PC-9 (cell line): ENCODE measurements at regions of chr20 and their contacts with region 1.

Region 1: DNA sequence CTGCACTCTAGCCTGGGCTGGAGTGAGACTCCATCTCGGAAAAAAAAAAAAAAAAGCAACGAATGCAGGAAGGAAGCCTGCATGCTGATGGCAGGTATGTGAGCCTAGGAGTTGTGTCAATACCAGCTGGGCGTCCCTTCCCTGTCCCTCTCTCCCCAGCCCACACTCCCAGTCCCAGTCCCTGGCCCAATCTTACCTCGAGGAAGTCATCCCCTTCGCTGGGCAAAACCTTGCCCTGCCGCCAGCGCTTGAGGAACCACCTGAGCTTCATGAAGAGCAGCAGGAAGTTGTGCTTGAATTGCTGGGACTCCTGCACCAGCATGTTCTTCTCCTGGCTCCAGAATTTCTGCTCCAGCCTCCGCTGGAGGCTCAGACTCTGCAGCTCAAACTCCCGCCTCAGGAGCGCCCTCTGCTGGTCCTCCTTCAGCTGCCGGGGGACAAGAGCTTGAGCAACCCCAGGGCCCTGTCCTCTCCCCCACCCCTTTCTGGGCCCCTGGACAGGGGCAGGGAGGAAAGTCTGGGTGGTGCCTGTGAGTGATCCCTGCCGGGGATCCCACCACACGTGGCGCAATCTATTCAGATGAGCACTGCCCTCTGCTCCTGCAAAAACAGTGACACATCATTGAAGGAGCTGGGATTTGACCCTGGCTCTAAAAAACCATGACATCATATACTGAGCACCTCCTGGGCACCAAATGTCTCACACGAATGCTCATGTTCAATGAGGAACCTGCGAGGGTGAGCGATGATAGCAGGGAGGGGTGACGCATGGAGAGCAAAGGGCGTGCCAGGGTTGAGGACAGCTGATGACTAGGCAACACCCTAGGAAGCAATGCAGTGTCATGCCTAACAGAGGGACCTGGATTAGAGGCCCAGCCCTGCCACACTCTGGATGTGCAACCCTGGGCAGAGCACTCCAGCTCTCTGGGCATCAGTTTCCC is 35.0 kb upstream of the DSN1 start:
- DNase-seq: peak; percentile 82 to 96
- H3K4me3 ChIP-seq: no peak overlapping the region
- H3K27ac ChIP-seq: peak overlapping the region; percentile 89
- H3K4me1 ChIP-seq: peaks cover 42% of the 10 kb centered on the region
- H3K27me3 ChIP-seq: no peaks in the 10 kb centered on the region
- CTCF ChIP-seq: peak; percentile 94

Region 2: DNA sequence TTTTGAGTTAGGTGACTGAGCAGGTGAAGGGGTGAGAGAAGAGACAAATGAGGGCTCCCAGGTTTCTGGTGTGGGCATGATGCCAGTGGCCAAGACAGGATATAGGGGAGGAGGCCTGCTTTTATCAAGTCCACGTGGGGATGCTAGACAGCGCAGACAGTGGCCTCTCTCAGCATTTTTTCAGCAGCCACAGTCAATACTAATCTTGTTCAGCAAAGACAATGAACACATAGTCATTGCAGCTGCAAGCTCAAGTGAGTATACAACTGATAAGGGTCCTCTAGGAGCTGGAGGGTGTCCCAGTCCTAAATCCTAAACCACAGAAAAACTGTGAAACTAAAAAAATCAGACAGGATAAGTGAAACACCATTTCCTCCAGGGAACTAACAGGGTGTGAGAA is 1445.4 kb before region 1 on chr20:
- CTCF ChIA-PET with region 1: no interaction called
- POLR2A ChIA-PET with region 1: no interaction called
- intact Hi-C with region 1: no loop called
- DNase-seq: no peak
- H3K4me3 ChIP-seq: no peak overlapping the region
- H3K27ac ChIP-seq: no peak overlapping the region
- H3K4me1 ChIP-seq: peaks cover 3% of the 10 kb centered on the region; the same call in 1 of the 2 replicates
- H3K27me3 ChIP-seq: no peaks in the 10 kb centered on the region
- CTCF ChIP-seq: no peak

Region 3: GRCh38 chr20:36773597-36774390 is 34.8 kb before region 1 on chr20 and contains the start of gene DSN1:
- CTCF ChIA-PET with region 1: no interaction called
- POLR2A ChIA-PET with region 1: interaction called, 6 read pairs
- intact Hi-C with region 1: loop called (anchors 2 kb)
- DNase-seq: peak; percentile 91 to 99
- H3K4me3 ChIP-seq: peak within 1 kb of the TSS; percentile 70
- H3K27ac ChIP-seq: peak within 1 kb of the TSS; percentile 85
- H3K4me1 ChIP-seq: peaks cover 7% of the 10 kb centered on the region
- H3K27me3 ChIP-seq: no peaks in the 10 kb centered on the region
- CTCF ChIP-seq: peak; percentile 87
- total RNA-seq, gene DSN1: 29.2 and 32.4 TPM in 2 replicates

Region 4: GRCh38 chr20:36784900-36785299 is 23.7 kb before region 1 on chr20:
- CTCF ChIA-PET with region 1: interaction called, 20 read pairs
- POLR2A ChIA-PET with region 1: no interaction called
- intact Hi-C with region 1: no loop called
- DNase-seq: no peak
- H3K4me3 ChIP-seq: no peak overlapping the region
- H3K27ac ChIP-seq: no peak overlapping the region
- H3K4me1 ChIP-seq: no peaks in the 10 kb centered on the region
- H3K27me3 ChIP-seq: no peaks in the 10 kb centered on the region
- CTCF ChIP-seq: no peak

Region 5: DNA sequence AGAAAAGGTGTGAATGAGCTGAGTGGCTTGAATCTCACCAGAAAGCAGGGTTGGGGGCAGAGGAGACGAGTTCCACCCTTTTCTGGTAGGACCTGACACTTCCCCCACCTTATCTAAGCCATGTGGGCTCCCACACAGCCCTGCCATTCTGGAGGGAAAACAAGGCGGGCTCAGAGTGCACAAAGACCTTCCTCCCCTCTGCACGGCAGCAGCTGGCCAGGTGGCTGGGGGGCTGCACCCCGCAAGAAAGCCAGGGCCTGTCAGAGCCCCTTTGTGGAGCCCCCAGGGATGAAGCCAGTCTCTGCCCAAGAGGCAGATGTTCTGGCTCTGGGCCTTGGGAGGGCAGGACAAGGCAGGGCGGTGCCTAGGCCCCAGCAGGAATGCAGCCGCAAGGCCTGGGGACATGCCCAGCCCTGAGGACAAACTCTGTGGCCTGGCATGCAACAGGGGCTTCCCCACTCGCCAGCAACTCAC is 13.4 kb after region 1 on chr20:
- CTCF ChIA-PET with region 1: interaction called, 6 read pairs
- POLR2A ChIA-PET with region 1: no interaction called
- intact Hi-C with region 1: loop called (anchors 1 kb)
- DNase-seq: peak; percentile 41 to 89
- H3K4me3 ChIP-seq: no peak overlapping the region
- H3K27ac ChIP-seq: no peak overlapping the region
- H3K4me1 ChIP-seq: peaks cover 47% of the 10 kb centered on the region
- H3K27me3 ChIP-seq: no peaks in the 10 kb centered on the region
- CTCF ChIP-seq: no peak

Region 6: GRCh38 chr20:36835453-36836198 is 27.0 kb after region 1 on chr20:
- CTCF ChIA-PET with region 1: interaction called, 47 read pairs
- POLR2A ChIA-PET with region 1: interaction called, 25 read pairs
- intact Hi-C with region 1: no loop called
- DNase-seq: peak; percentile 73 to 93
- H3K4me3 ChIP-seq: peak overlapping the region; percentile 39; the same call in 1 of the 2 replicates
- H3K27ac ChIP-seq: 0 out of 2 replicates have a peak overlapping the region, but pooled peaks have one; percentile 16
- H3K4me1 ChIP-seq: peaks cover 18% of the 10 kb centered on the region
- H3K27me3 ChIP-seq: no peaks in the 10 kb centered on the region
- CTCF ChIP-seq: no peak

Region 7: DNA sequence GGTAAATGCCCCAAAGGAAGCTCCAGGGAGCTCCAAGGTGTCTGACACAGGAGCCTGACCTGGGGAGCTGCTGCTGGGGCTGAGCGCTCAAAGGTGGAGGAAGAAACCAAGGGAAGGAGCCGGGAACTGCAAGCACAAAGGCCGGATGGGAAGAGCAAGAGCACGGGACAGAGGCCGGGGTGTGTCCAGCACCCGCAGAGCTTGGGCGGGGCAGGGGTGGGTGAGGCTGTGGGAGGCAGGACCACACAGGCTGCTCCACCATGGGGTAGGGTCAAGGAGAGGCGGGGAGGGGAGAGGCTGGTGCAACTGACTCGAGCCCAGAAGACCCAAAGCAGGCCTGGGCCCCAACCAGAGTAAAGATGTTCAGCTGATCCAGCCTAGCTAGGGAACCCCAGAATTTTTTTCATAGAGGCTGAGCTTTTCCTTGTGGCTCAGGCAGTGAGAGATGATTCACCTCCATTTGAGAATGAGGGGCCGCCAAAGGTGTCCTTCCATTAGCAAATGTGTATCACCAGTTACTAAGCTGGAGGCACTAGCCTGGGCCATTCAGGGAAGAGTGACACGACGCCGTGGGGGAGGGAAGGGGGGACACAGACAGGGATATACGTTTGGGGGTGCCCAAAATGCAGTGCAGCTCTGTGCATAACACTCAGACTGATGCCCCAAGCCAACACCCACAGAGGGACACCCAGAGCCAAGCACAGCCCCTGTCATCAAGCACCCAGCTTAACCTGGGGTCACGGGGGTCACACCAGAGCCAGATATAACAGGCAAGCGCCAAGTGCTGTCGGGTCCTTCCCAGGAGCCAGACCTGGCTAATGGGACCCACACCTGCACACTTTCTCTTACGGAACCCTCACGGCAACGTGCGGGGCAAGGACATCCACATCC is 46.0 kb after region 1 on chr20:
- CTCF ChIA-PET with region 1: interaction called, 10 read pairs
- POLR2A ChIA-PET with region 1: no interaction called
- intact Hi-C with region 1: no loop called
- DNase-seq: no peak
- H3K4me3 ChIP-seq: no peak overlapping the region
- H3K27ac ChIP-seq: no peak overlapping the region
- H3K4me1 ChIP-seq: no peaks in the 10 kb centered on the region
- H3K27me3 ChIP-seq: no peaks in the 10 kb centered on the region
- CTCF ChIP-seq: no peak

Region 8: DNA sequence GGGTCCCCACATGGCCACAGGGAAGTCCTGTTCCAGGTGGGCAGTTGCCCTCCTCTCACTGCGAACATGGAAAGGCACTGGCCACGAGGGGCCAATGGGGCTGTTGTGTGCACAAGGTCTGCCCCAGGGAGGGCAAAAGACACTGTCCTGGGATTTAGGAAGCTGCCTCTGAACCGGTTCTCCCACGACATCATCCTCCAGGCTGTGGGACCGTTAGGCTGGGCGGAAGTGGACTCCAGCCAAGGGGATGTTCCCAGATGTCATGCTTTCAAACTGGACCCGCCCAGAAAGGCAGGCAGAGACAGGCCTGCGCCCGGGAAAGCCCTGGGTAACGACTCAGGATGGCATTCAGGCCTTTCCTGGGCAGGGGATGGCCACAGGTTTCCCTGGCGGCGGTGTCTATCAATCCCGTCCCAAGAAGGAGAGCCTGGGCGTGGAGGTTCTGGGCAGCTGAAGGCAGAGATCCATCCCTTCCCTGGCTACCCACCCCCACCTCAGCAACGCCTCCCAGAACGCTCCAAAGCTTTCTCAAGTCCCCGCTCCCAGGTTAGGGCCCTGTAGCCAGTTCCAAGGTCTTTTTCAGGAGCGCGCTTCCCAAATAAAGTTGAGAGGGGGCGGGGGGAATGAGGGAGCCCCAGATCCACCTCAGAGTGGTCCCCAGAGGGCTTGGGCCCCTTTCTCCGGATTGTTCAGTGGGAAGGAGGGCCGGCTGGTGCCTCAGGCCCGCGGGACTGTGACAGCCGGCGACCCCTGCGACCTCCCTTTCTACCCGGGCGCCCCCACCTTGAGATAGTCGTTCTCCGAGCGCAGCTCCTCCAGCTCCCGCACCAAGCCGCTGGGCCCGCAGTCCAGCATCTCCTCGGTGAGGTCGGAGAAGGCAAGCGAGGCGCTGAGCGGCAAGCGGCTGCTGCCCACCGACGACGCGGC is 53.6 kb after region 1 on chr20:
- CTCF ChIA-PET with region 1: interaction called, 6 read pairs
- POLR2A ChIA-PET with region 1: no interaction called
- intact Hi-C with region 1: loop called (anchors 1 kb)
- DNase-seq: peak; percentile 38 to 80
- H3K4me3 ChIP-seq: no peak overlapping the region; the same call in 1 of the 2 replicates
- H3K27ac ChIP-seq: no peak overlapping the region
- H3K4me1 ChIP-seq: 0 out of 2 replicates have a peak, but pooled peaks cover 12% of the 10 kb centered on the region
- H3K27me3 ChIP-seq: no peaks in the 10 kb centered on the region
- CTCF ChIP-seq: no peak